ENCODE measurements at regions of chr15 and their contacts with region 1.

Region 1: GRCh38 chr15:92881802-92882696 is 18.1 kb upstream of the CHD2 start:
- DNase-seq: peak; percentile 99
- ATAC-seq: peak; percentile 93
- H3K4me3 Mint-ChIP-seq: peak overlapping the region; percentile 67
- H3K27ac Mint-ChIP-seq: peak overlapping the region; percentile 99
- H3K4me1 Mint-ChIP-seq: peaks cover 65% of the 10 kb centered on the region
- H3K27me3 Mint-ChIP-seq: no peaks in the 10 kb centered on the region
- CTCF ChIP-seq: no peak

Region 2: GRCh38 chr15:92797168-92797951 is 84.7 kb before region 1 on chr15:
- CTCF ChIA-PET with region 1: interaction called, 11 read pairs
- POLR2A ChIA-PET with region 1: interaction called, 11 read pairs
- DNase-seq: no peak
- ATAC-seq: peak; percentile 82
- H3K4me3 Mint-ChIP-seq: no peak overlapping the region
- H3K27ac Mint-ChIP-seq: peak overlapping the region; percentile 93
- H3K4me1 Mint-ChIP-seq: peaks cover 8% of the 10 kb centered on the region
- H3K27me3 Mint-ChIP-seq: no peaks in the 10 kb centered on the region
- CTCF ChIP-seq: peak; percentile 56

Region 3: DNA sequence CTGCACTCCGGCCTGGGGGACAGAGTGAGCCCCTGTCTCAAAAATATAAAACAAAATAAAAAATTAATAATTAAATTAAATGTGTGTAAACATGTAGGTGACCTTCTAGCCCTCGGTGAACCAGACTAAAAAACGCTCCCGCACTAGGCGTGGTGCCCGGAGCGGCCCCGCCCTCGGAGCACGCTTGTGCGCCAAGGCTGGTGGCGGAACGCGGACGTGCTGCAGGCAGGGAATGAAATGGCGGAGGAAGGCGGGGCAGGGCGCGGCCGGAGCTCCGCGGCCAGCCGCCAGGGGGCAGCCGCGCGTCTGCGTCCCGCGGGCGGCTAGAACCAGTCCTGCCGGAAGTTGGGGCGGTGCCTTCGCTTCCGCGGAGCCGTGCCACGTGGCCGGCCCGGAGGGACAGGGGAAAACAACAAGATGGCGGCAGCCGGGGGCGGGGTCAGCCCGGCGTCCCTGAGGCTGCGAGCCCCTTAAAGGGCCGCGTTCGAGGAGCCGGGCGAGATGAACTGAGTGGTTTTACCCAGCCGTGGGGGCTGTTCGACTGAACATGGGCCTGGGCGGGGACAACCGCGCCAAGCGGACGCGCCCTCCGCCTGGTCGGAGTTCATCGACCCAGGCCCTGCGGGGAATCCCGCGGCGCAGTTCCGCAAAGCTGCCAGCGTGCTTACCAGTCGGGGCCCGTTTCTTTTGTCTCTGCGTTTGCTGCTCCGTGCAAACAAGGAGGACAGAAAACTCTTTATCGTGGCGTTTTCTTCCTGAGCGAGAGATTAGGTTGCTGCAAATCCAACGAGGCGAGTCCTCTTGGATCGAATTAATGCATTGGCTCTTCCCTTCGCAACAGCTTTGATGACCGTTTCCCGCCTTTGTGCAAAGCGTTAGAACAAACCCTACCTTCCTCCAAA is 72.8 kb before region 1 on chr15:
- CTCF ChIA-PET with region 1: interaction called, 48 read pairs
- POLR2A ChIA-PET with region 1: interaction called, 191 read pairs
- DNase-seq: peak; percentile 99
- ATAC-seq: peak; percentile 81
- H3K4me3 Mint-ChIP-seq: peak overlapping the region; percentile 84
- H3K27ac Mint-ChIP-seq: peak overlapping the region; percentile 100
- H3K4me1 Mint-ChIP-seq: peaks cover 43% of the 10 kb centered on the region
- H3K27me3 Mint-ChIP-seq: no peaks in the 10 kb centered on the region
- CTCF ChIP-seq: peak; percentile 91

Region 4: DNA sequence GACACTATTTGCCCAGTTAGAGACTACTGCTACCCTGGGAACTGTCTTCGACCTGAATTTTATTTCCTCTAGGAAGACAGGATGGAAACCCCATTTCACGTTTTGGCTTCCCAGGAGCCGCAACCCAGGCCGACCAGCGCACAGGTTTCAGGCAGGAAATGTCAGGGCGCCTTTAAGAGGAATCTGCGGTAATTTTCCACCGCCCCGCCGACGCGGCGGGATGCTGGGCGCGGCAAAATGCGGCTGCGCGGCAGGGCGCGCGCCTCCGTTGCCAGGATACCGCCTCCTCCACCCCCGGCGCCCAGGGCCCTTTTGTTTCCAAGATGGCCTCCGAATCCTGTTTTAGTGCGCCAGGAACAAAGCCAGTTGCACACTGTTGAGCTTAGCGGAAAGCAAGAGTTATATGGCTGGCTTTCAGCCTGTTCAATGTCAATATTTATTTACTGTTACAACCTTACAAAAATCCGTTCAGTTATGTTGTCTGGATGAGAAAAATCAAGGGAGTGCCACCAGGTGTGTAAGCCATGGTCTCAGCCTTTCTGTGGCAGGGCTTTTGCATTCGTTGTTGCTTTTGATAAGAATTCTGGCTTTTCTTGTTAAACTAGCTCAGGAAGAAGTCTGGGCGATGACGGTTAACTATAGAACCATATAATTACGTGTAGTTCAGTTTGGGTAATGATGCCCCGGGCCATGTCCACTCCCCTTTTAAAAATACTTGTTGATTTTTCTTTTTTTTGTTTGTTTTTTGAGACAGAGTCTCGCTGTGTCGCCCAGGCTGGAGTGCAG is 61.6 kb before region 1 on chr15:
- CTCF ChIA-PET with region 1: interaction called, 4 read pairs
- POLR2A ChIA-PET with region 1: interaction called, 39 read pairs
- DNase-seq: peak; percentile 92
- ATAC-seq: peak; percentile 72
- H3K4me3 Mint-ChIP-seq: peak overlapping the region; percentile 67
- H3K27ac Mint-ChIP-seq: peak overlapping the region; percentile 99
- H3K4me1 Mint-ChIP-seq: peaks cover 73% of the 10 kb centered on the region
- H3K27me3 Mint-ChIP-seq: no peaks in the 10 kb centered on the region
- CTCF ChIP-seq: no peak

Region 5: GRCh38 chr15:92831655-92832328 is 50.3 kb before region 1 on chr15:
- CTCF ChIA-PET with region 1: interaction called, 6 read pairs
- POLR2A ChIA-PET with region 1: interaction called, 89 read pairs
- DNase-seq: peak; percentile 92
- ATAC-seq: peak; percentile 100
- H3K4me3 Mint-ChIP-seq: peak overlapping the region; percentile 50
- H3K27ac Mint-ChIP-seq: peak overlapping the region; percentile 99
- H3K4me1 Mint-ChIP-seq: peaks cover 47% of the 10 kb centered on the region
- H3K27me3 Mint-ChIP-seq: no peaks in the 10 kb centered on the region
- CTCF ChIP-seq: no peak

Region 6: GRCh38 chr15:92896561-92896960 is 14.5 kb after region 1 on chr15:
- CTCF ChIA-PET with region 1: interaction called, 10 read pairs
- POLR2A ChIA-PET with region 1: interaction called, 226 read pairs
- DNase-seq: no peak
- ATAC-seq: no peak
- H3K4me3 Mint-ChIP-seq: no peak overlapping the region
- H3K27ac Mint-ChIP-seq: peak overlapping the region; percentile 73
- H3K4me1 Mint-ChIP-seq: peaks cover 3% of the 10 kb centered on the region; the same call in 1 of the 2 replicates
- H3K27me3 Mint-ChIP-seq: no peaks in the 10 kb centered on the region
- CTCF ChIP-seq: no peak

Region 7: GRCh38 chr15:92903941-92904831 is 22.1 kb after region 1 on chr15:
- CTCF ChIA-PET with region 1: interaction called, 10 read pairs
- POLR2A ChIA-PET with region 1: interaction called, 226 read pairs
- DNase-seq: peak; percentile 99
- ATAC-seq: peak; percentile 86
- H3K4me3 Mint-ChIP-seq: peak overlapping the region; percentile 95
- H3K27ac Mint-ChIP-seq: peak overlapping the region; percentile 100
- H3K4me1 Mint-ChIP-seq: peaks cover 51% of the 10 kb centered on the region
- H3K27me3 Mint-ChIP-seq: no peaks in the 10 kb centered on the region; the same call in 1 of the 2 replicates
- CTCF ChIP-seq: no peak